CD4-positive, alpha-beta T cell (primary cell): ENCODE measurements at regions of chr3 and their contacts with region 1.

Region 1: GRCh38 chr3:133487920-133488540 is 85.5 kb upstream of the CDV3 start:
- DNase-seq: peak; percentile 34 to 81 (median 54)
- ATAC-seq: peak; percentile 35
- H3K4me3 ChIP-seq: no peak overlapping the region
- H3K4me3 Mint-ChIP-seq: peak overlapping the region; percentile 65
- H3K27ac ChIP-seq: no peak overlapping the region
- H3K27ac Mint-ChIP-seq: peak overlapping the region; percentile 98
- H3K4me1 ChIP-seq: peaks cover 43% of the 10 kb centered on the region
- H3K4me1 Mint-ChIP-seq: peaks cover 52% of the 10 kb centered on the region
- H3K27me3 ChIP-seq: no peaks in the 10 kb centered on the region
- H3K27me3 Mint-ChIP-seq: no peaks in the 10 kb centered on the region
- CTCF ChIP-seq: peak; percentile 76

Region 2: GRCh38 chr3:133506215-133506901 is 18.3 kb after region 1 on chr3:
- CTCF ChIA-PET with region 1: no interaction called
- POLR2A ChIA-PET with region 1: interaction called, 8 read pairs
- intact Hi-C with region 1: loop called in 1 of 2 experiments (anchors 2 kb)
- DNase-seq: peak in 8 of 14 experiments; percentile 9 to 79 (median 28)
- ATAC-seq: peak; percentile 96
- H3K4me3 ChIP-seq: peak overlapping the region; percentile 43
- H3K4me3 Mint-ChIP-seq: peak overlapping the region; percentile 80
- H3K27ac ChIP-seq: peak overlapping the region in 1 of 2 donors; percentile 77
- H3K27ac Mint-ChIP-seq: peak overlapping the region; percentile 84
- H3K4me1 ChIP-seq: peaks cover 7% of the 10 kb centered on the region
- H3K4me1 Mint-ChIP-seq: peaks cover 17% of the 10 kb centered on the region
- H3K27me3 ChIP-seq: no peaks in the 10 kb centered on the region
- H3K27me3 Mint-ChIP-seq: no peaks in the 10 kb centered on the region
- CTCF ChIP-seq: no peak

Region 3: GRCh38 chr3:133578548-133579191 is 90.6 kb after region 1 on chr3:
- CTCF ChIA-PET with region 1: interaction called, 3 read pairs
- POLR2A ChIA-PET with region 1: interaction called, 104 read pairs
- intact Hi-C with region 1: loop called (anchors 1 to 2 kb)
- DNase-seq: peak in 3 of 14 experiments; percentile 17 to 38 (median 26)
- ATAC-seq: no peak
- H3K4me3 ChIP-seq: no peak overlapping the region
- H3K4me3 Mint-ChIP-seq: peak overlapping the region; percentile 82
- H3K27ac ChIP-seq: peak overlapping the region in 1 of 2 donors; percentile 19
- H3K27ac Mint-ChIP-seq: peak overlapping the region; percentile 99
- H3K4me1 ChIP-seq: peaks cover 54% of the 10 kb centered on the region
- H3K4me1 Mint-ChIP-seq: peaks cover 74% of the 10 kb centered on the region
- H3K27me3 ChIP-seq: no peaks in the 10 kb centered on the region
- H3K27me3 Mint-ChIP-seq: no peaks in the 10 kb centered on the region
- CTCF ChIP-seq: peak; percentile 71

Region 4: GRCh38 chr3:133661454-133662277 is 173.6 kb after region 1 on chr3 and contains the start of gene TOPBP1:
- CTCF ChIA-PET with region 1: no interaction called
- POLR2A ChIA-PET with region 1: no interaction called
- intact Hi-C with region 1: loop called in 1 of 2 experiments (anchors 5 kb)
- DNase-seq: peak; percentile 70 to 92 (median 81)
- ATAC-seq: peak; percentile 85
- H3K4me3 ChIP-seq: peak within 1 kb of the TSS; percentile 72
- H3K4me3 Mint-ChIP-seq: peak within 1 kb of the TSS; percentile 97
- H3K27ac ChIP-seq: peak within 1 kb of the TSS; percentile 58 to 73
- H3K27ac Mint-ChIP-seq: peak within 1 kb of the TSS; percentile 95
- H3K4me1 ChIP-seq: peaks cover 26% of the 10 kb centered on the region
- H3K4me1 Mint-ChIP-seq: peaks cover 45% of the 10 kb centered on the region
- H3K27me3 ChIP-seq: no peaks in the 10 kb centered on the region
- H3K27me3 Mint-ChIP-seq: no peaks in the 10 kb centered on the region
- CTCF ChIP-seq: no peak
- total RNA-seq, gene TOPBP1: 29.1 to 32.4 TPM

Region 5: DNA sequence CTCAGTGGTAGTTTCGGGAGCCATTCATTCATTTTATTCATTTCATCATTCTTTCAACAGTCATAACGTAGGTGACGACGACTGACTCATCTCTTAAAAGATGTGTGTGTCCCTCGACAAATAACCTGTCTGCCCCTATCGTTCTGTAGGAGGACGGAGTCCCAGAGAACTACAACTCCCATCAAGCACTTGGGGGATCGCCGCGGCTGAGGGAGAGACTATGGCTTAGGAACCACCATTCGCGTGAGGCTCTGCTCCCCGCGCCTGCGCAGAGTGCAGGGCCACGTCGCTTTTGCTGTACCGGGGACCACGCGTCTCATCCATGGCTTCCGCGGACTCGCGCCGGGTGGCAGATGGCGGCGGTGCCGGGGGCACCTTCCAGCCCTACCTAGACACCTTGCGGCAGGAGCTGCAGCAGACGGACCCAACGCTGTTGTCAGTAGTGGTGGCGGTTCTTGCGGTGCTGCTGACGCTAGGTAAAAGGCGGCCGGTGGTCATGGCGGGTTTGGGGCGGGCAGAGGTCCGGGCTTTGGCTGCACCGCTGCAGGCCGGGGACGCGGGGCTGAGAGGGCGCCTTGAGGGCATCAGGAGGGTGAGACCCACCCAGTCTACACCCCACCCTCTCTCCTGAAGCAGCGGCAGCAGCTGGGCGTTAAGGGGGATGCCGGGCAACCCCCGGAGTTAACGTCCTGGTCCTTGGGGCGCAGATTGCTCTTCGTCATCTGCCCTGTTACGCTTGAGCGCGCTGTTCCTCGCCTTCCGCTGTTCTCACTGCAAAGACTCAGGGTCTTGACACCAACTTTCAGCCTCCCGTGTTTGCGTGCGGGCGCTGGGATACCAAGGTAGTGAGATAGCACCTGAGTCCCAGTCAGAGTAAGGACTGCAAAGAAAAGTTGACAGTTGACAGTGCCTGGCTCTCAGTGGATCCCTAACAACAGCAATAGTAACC is 317.8 kb after region 1 on chr3 and contains the start of gene SRPRB:
- CTCF ChIA-PET with region 1: no interaction called
- POLR2A ChIA-PET with region 1: no interaction called
- intact Hi-C with region 1: loop called (anchors 10 kb)
- DNase-seq: peak; percentile 90 to 99 (median 94)
- ATAC-seq: peak; percentile 95
- H3K4me3 ChIP-seq: peak within 1 kb of the TSS; percentile 92
- H3K4me3 Mint-ChIP-seq: peak within 1 kb of the TSS; percentile 97
- H3K27ac ChIP-seq: peak within 1 kb of the TSS; percentile 70 to 75
- H3K27ac Mint-ChIP-seq: peak within 1 kb of the TSS; percentile 94
- H3K4me1 ChIP-seq: peaks cover 16% of the 10 kb centered on the region
- H3K4me1 Mint-ChIP-seq: peaks cover 40% of the 10 kb centered on the region
- H3K27me3 ChIP-seq: no peaks in the 10 kb centered on the region
- H3K27me3 Mint-ChIP-seq: no peaks in the 10 kb centered on the region
- CTCF ChIP-seq: no peak
- total RNA-seq, gene SRPRB: 19.1 to 19.9 TPM

Region 6: GRCh38 chr3:133894353-133895207 is 406.6 kb after region 1 on chr3:
- CTCF ChIA-PET with region 1: no interaction called
- POLR2A ChIA-PET with region 1: no interaction called
- intact Hi-C with region 1: no loop called
- DNase-seq: no peak
- ATAC-seq: no peak
- H3K4me3 ChIP-seq: no peak overlapping the region
- H3K4me3 Mint-ChIP-seq: no peak overlapping the region
- H3K27ac ChIP-seq: no peak overlapping the region
- H3K27ac Mint-ChIP-seq: no peak overlapping the region
- H3K4me1 ChIP-seq: peaks cover 7% of the 10 kb centered on the region
- H3K4me1 Mint-ChIP-seq: no peaks in the 10 kb centered on the region
- H3K27me3 ChIP-seq: peaks cover 23 to 41% of the 10 kb centered on the region in 2 experiments
- H3K27me3 Mint-ChIP-seq: peaks cover 66% of the 10 kb centered on the region
- CTCF ChIP-seq: no peak

Region 7: GRCh38 chr3:133927540-133928066 is 439.6 kb after region 1 on chr3:
- CTCF ChIA-PET with region 1: no interaction called
- POLR2A ChIA-PET with region 1: no interaction called
- intact Hi-C with region 1: loop called in 1 of 2 experiments (anchors 2 kb)
- DNase-seq: peak; percentile 47 to 90 (median 68)
- ATAC-seq: peak; percentile 97
- H3K4me3 ChIP-seq: peak overlapping the region; percentile 51
- H3K4me3 Mint-ChIP-seq: peak overlapping the region; percentile 80
- H3K27ac ChIP-seq: no peak overlapping the region
- H3K27ac Mint-ChIP-seq: no peak overlapping the region
- H3K4me1 ChIP-seq: peaks cover 14% of the 10 kb centered on the region
- H3K4me1 Mint-ChIP-seq: peaks cover 7% of the 10 kb centered on the region
- H3K27me3 ChIP-seq: peaks cover 0 to 9% of the 10 kb centered on the region in 2 experiments
- H3K27me3 Mint-ChIP-seq: peaks cover 18% of the 10 kb centered on the region
- CTCF ChIP-seq: peak; percentile 54